A673 (cell line): ENCODE measurements at regions of chr11 and their contacts with region 1.

Region 1: DNA sequence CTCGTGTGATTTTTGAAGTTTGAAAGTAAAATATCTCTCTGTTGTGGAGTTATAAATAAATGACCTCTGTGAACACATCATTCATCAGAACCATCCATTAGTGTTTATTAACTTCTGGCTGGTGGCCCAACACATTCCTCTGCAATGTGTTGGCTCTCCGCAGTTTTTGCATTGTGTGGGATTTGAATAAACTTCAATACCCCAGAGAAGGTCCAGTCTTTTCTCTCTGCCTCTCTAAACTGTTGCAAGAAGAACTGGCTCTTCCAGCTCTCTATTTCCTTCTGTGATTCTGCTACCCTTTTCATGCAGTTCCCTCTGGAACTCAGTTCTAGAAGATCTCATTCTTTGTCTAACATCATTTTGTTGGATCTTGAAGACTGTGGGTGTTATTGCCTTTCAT is 125.0 kb upstream of the ARHGAP42 start:
- DNase-seq: peak; percentile 75
- H3K4me3 ChIP-seq: no peak overlapping the region
- H3K27ac ChIP-seq: no peak overlapping the region
- H3K4me1 ChIP-seq: peaks cover 29% of the 10 kb centered on the region
- H3K27me3 ChIP-seq: no peaks in the 10 kb centered on the region
- CTCF ChIP-seq: no peak

Region 2: DNA sequence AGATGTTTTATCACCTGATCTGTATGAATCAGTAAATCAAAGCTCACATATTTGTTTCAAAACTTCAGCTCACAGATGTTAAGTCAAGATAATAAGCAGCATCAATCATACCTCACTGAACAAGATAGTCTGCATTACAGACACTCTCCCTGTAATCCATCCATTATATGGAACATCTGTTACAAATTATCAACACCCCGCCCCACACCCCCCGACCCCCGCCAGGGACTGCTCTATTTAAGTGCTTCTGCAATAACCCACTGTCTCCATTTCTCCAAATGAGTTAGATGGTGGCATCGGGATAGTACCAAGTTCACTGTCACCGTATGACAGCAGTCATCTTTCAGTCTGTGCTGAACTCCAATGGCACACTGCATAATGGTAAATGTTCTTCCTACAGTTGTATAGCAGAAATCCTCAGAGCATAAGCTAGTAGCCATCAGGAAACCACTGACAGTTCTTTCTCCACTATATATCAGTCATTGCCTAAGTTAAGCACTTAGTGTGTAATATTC is 322.0 kb before region 1 on chr11:
- CTCF ChIA-PET with region 1: no interaction called
- POLR2A ChIA-PET with region 1: no interaction called
- intact Hi-C with region 1: loop called (anchors 10 kb)
- DNase-seq: peak; percentile 73
- H3K4me3 ChIP-seq: no peak overlapping the region
- H3K27ac ChIP-seq: no peak overlapping the region
- H3K4me1 ChIP-seq: peaks cover 20% of the 10 kb centered on the region
- H3K27me3 ChIP-seq: no peaks in the 10 kb centered on the region
- CTCF ChIP-seq: no peak

Region 3: GRCh38 chr11:100403817-100404216 is 158.3 kb before region 1 on chr11:
- CTCF ChIA-PET with region 1: no interaction called
- POLR2A ChIA-PET with region 1: no interaction called
- intact Hi-C with region 1: no loop called
- DNase-seq: no peak
- H3K4me3 ChIP-seq: no peak overlapping the region
- H3K27ac ChIP-seq: no peak overlapping the region
- H3K4me1 ChIP-seq: no peaks in the 10 kb centered on the region
- H3K27me3 ChIP-seq: no peaks in the 10 kb centered on the region
- CTCF ChIP-seq: no peak

Region 4: GRCh38 chr11:100459811-100460210 is 102.3 kb before region 1 on chr11:
- CTCF ChIA-PET with region 1: no interaction called
- POLR2A ChIA-PET with region 1: no interaction called
- intact Hi-C with region 1: loop called (anchors 5 kb)
- DNase-seq: peak; percentile 97
- H3K4me3 ChIP-seq: peak overlapping the region; percentile 12
- H3K27ac ChIP-seq: peak overlapping the region; percentile 75
- H3K4me1 ChIP-seq: peaks cover 31% of the 10 kb centered on the region
- H3K27me3 ChIP-seq: no peaks in the 10 kb centered on the region
- CTCF ChIP-seq: no peak